ENCODE measurements at regions of chr7 and their contacts with region 1.

Region 1: GRCh38 chr7:123682690-123683089 is 27.0 kb downstream of the LMOD2 start:
- DNase-seq: peak; percentile 52
- ATAC-seq: peak; percentile 66
- H3K4me3 ChIP-seq: no peak overlapping the region
- H3K27ac ChIP-seq: no peak overlapping the region
- H3K4me1 ChIP-seq: 0 out of 2 replicates have a peak, but pooled peaks cover 8% of the 10 kb centered on the region
- H3K27me3 ChIP-seq: no peaks in the 10 kb centered on the region
- CTCF ChIP-seq: peak; percentile 62
- EP300 ChIP-seq: no peak
- POLR2A ChIP-seq: no peak
- RAD21 ChIP-seq: peak; percentile 52; the same call in 1 of the 2 replicates

Region 2: GRCh38 chr7:123170333-123171246 is 512.1 kb before region 1 on chr7:
- CTCF ChIA-PET with region 1: no interaction called
- POLR2A ChIA-PET with region 1: no interaction called
- in situ Hi-C with region 1: no loop called
- intact Hi-C with region 1: no loop called
- DNase-seq: no peak
- ATAC-seq: no peak
- H3K4me3 ChIP-seq: no peak overlapping the region
- H3K27ac ChIP-seq: no peak overlapping the region
- H3K4me1 ChIP-seq: no peaks in the 10 kb centered on the region
- H3K27me3 ChIP-seq: no peaks in the 10 kb centered on the region
- CTCF ChIP-seq: no peak
- EP300 ChIP-seq: no peak
- POLR2A ChIP-seq: no peak
- RAD21 ChIP-seq: no peak

Region 3: GRCh38 chr7:123635551-123636359 is 46.9 kb before region 1 on chr7:
- CTCF ChIA-PET with region 1: no interaction called
- POLR2A ChIA-PET with region 1: no interaction called
- in situ Hi-C with region 1: no loop called
- intact Hi-C with region 1: loop called (anchors 2 kb)
- DNase-seq: peak; percentile 5
- ATAC-seq: peak; percentile 60; the same call in 2 of the 3 replicates
- H3K4me3 ChIP-seq: no peak overlapping the region
- H3K27ac ChIP-seq: no peak overlapping the region
- H3K4me1 ChIP-seq: no peaks in the 10 kb centered on the region
- H3K27me3 ChIP-seq: no peaks in the 10 kb centered on the region
- CTCF ChIP-seq: peak; percentile 55
- EP300 ChIP-seq: no peak
- POLR2A ChIP-seq: no peak
- RAD21 ChIP-seq: no peak; the same call in 1 of the 2 replicates